ENCODE measurements at regions of chr22 and their contacts with region 1.

Region 1: DNA sequence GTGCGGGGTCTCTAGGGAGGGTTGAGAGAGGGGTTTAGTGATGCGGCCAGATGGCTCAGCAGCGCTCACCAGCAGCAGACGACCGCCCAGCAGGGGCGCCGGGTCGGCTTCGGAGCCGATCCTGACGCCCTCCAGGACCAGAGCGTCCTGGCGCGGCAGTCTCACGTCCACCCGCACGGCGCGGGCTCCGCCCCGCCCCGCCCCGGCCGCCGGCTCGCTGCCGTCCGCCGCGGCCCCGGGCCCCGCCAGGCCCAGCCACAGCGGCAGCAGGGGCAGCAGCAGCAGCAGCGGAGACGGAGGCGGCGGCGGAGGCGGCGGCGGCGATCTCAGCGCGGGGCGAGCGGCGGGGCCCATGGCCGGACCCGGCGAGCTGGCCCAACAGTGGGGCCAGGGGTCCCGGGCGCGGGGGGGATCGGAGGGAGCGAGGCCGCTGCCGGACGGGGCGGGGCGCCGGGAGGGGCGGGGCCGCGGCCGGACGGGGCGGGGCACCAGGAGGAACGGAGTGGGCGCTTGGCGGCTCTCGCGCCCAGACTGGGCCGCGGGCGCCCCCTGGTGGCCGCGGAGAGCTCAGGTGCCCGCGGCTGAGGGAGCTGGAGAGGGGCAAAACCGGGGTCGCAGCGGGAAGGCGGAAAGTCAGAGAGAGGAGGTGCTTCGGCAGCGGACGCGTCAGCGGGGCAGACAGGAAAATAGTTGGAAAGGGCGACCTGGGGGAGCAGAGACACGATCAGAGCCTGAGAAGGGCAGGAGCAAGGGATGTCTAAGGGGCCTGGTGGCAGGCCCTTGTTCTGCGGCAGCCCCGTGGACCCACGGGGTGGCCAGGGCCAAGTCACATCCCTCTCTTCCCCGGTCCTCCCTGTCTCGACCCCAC is at the start of gene RNF215:
- DNase-seq: peak; percentile 96
- CTCF ChIP-seq: peak; percentile 93

Region 2: GRCh38 chr22:30262917-30263741 is 124.1 kb before region 1 on chr22:
- CTCF ChIA-PET with region 1: interaction called, 39 read pairs
- POLR2A ChIA-PET with region 1: no interaction called
- DNase-seq: peak; percentile 76
- CTCF ChIP-seq: peak; percentile 90

Region 3: GRCh38 chr22:30336752-30337460 is 50.3 kb before region 1 on chr22:
- CTCF ChIA-PET with region 1: no interaction called
- POLR2A ChIA-PET with region 1: no interaction called
- DNase-seq: no peak
- CTCF ChIP-seq: no peak

Region 4: DNA sequence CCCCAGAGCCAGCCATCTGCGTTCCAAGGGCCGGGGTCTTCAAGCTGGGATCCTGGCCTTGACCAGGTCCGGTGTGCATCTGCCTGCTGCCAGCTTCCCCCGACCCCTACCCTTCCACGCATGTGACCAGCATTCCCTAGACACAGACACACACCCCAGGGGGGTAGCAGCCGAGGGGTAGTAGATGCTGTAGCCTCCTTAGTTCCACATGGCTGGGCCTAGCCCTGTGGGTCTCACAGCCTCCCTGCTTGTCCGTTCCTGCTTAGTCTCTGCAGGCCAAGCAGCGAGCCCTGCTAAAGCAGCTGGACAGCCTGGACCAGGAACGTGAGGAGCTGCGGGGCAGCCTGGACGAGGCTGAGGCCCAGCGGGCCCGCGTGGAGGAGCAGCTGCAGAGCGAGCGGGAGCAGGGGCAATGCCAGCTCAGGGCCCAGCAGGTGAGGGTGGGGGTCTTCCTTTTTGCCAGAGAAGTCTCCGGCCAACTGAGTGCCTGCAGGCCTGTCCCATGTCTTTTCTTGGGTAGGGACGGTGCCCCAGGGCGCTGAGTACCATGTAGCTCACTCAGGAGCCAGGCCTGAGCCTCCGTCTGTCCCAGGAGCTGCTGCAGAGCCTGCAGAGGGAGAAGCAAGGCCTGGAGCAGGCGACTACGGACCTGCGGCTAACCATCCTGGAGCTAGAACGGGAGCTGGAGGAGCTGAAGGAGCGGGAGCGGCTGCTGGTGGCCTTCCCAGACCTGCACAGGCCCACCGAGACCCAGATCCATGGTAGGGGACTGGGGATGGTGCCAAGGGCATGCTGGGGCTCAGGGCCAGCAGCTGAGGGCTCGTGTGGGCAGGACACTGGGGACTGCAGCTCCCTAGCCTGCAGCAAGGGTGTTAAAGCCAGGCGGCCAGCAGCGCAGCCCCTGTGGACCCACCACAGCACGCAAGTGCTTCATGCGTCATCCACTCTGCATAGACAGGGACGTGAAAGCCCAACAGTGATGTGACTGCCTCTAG is 13.6 kb before region 1 on chr22:
- CTCF ChIA-PET with region 1: interaction called, 35 read pairs
- POLR2A ChIA-PET with region 1: no interaction called
- DNase-seq: no peak
- CTCF ChIP-seq: no peak

Region 5: GRCh38 chr22:30413745-30414524 is 26.7 kb after region 1 on chr22:
- CTCF ChIA-PET with region 1: interaction called, 33 read pairs
- POLR2A ChIA-PET with region 1: interaction called, 5 read pairs
- DNase-seq: no peak
- CTCF ChIP-seq: no peak

Region 6: DNA sequence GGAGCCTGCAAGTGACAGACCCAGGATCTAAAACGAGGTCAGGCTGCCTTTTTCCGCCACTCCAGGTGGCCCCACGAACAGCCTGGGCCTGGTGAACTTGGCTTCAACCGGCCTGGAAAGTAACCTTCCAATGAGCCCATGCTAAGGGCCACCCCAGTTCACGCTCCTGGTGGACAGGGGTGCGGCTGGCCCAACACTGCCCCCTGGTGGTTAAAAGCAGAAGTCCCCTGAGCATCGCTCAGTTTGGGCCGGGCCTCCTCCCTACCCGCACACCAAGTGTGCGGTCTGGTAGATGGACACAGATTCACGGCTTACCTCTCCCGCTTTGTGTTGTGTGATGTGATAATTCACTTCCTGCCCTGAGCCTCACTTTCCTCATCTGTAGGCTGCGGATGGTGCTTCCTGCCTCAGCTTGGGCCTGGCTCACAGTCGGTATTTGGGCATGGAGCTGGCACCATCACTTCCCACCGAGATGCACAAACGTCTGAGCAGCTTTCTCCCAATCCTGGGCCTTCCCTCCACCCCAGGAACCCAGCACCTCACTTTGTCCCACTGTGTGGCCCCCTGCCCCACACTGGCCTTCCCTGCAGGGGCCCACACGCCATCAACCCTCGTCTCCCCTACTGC is 98.3 kb after region 1 on chr22:
- CTCF ChIA-PET with region 1: interaction called, 52 read pairs
- POLR2A ChIA-PET with region 1: no interaction called
- DNase-seq: peak; percentile 94
- CTCF ChIP-seq: peak; percentile 88

Measured in GM10248 (cell line).